Dorsolateral prefrontal cortex (tissue), 120 donors: ENCODE measurements at regions of chr13 and their contacts with region 1.

Region 1: DNA sequence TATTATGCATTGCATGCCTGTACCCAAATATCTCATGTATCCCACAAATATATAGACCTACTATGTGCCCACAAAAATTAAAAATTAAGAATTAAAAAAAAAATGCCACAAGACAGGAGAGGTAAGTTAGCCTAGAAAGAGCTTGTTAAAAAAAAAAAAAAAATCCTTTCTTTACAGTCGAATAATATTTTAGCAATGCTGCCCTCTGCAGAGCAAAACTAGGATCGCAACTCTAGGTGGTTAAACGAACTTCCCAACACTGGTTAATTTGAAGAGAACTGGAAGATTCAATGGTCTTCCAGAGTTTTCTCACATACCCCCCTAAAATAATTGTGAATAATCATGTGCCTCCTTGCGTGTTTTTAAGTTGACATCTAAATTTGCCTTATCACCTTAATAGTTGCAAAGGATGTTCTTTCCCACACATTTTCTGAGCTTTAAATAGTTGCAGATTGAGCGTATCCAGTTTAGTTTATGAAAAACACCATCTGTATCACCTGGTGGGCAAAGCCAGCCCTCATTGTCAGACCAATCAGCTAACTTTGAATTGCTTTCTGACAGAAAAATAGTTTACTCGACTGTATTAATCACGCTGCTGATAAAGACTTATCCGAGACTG is 47.4 kb upstream of the RCBTB2 start:
- DNase-seq: peak in 6 of 10 donors; percentile 47 to 84 (median 56)
- H3K4me3 ChIP-seq: no peak overlapping the region
- H3K27ac ChIP-seq: peak overlapping the region in 4 of 59 donors; percentile 21 to 66 (median 44)
- H3K27me3 ChIP-seq: no peaks in the 10 kb centered on the region
- CTCF ChIP-seq: peak; percentile 72 to 93 (median 84)

Region 2: DNA sequence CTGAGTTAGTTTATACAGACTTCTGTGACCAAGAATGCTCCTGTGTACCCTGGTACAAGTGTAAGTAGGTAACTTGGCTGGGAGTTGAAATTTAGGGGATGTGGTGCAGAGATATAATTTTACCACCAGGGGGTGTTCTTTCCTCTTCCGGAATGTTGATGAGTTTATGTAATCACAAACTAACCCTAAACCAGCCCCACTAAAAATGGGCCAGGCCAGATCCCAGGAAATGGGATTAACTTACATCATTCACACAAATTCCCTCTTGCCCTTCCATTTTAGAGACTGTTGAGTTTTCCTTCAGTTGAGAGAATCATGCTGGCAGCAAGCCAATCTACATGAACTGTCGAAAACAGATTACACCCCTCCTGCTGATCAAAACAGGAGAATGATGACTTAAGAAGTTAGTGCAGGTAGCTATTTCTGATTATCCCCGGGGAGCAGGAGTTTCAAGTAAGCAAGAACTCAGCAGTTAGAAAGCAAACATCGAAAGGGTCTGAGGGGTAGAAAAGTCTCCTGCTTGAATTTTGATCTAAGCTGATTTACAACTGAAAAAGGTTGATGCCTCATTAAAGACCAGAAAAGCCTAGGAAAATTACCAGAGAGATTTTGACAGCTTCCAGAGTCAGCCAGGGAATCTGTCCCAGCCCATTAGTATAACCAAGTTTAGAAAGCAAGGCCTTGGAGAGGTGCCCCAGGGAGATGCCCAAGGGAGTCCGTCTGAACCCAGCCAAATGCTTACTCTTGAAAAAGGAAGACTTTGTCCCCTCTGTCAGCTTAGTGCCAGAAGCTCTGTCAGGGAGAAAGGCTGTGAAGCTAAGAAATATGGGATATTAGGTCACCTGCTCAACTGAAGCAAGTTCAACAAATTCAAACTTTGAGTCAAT is 453.1 kb before region 1 on chr13:
- intact Hi-C with region 1: loop called (anchors 5 to 10 kb)
- DNase-seq: peak in 2 of 10 donors; percentile 31 to 80
- H3K4me3 ChIP-seq: peak overlapping the region in 16 of 59 donors; percentile 0 to 39 (median 14)
- H3K27ac ChIP-seq: peak overlapping the region in 53 of 59 donors; percentile 1 to 89 (median 69)
- H3K27me3 ChIP-seq: no peaks in the 10 kb centered on the region
- CTCF ChIP-seq: peak; percentile 66 to 98 (median 84)

Region 3: DNA sequence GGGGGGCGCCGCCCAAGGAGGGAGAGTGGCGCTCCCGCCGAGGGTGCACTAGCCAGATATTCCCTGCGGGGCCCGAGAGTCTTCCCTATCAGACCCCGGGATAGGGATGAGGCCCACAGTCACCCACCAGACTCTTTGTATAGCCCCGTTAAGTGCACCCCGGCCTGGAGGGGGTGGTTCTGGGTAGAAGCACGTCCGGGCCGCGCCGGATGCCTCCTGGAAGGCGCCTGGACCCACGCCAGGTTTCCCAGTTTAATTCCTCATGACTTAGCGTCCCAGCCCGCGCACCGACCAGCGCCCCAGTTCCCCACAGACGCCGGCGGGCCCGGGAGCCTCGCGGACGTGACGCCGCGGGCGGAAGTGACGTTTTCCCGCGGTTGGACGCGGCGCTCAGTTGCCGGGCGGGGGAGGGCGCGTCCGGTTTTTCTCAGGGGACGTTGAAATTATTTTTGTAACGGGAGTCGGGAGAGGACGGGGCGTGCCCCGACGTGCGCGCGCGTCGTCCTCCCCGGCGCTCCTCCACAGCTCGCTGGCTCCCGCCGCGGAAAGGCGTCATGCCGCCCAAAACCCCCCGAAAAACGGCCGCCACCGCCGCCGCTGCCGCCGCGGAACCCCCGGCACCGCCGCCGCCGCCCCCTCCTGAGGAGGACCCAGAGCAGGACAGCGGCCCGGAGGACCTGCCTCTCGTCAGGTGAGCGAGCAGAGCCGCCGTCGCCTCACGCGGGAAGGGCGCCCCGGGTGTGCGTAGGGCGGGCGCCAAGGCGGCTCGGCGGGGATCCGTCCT is 276.7 kb before region 1 on chr13 and contains the start of gene RB1:
- intact Hi-C with region 1: loop called in 1 of 2 experiments (anchors 10 kb)
- DNase-seq: peak; percentile 72 to 93 (median 85)
- H3K4me3 ChIP-seq: peak within 1 kb of the TSS; percentile 59 to 100 (median 96)
- H3K27ac ChIP-seq: peak within 1 kb of the TSS; percentile 77 to 99 (median 96)
- H3K27me3 ChIP-seq: no peaks in the 10 kb centered on the region
- CTCF ChIP-seq: peak in 11 of 56 donors; percentile 4 to 36 (median 16)
- total RNA-seq, gene RB1: 21.5 to 51.3 (median 33.9) TPM

Region 4: DNA sequence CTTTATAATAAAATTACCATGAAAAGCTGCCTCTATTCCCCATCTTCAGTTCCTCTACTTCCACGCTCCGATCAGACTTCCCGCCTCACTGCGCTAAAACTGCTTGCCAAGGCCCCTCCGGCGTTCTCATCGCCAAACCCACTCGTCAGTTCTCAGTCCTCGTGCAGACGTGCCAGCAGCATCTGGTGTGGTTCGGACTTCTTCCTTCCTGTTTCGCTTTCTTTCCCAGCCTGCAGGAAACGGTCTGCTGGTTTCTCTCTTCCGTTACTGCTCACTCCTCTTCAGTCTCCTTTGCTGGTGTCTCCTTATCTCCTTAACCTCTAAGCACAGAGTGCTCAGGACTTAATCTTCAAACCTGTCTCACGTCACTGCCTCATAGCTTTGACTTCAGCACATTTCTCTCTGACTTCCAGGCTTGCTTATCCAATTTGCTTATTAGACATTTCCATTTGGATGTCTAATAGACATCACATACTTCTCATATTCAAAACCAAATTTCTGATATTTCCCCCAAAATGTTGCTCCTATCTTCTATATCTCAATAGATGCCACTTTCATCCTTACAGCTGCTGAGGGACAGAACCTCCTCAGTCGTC is 87.7 kb before region 1 on chr13:
- intact Hi-C with region 1: loop called (anchors 5 to 10 kb)
- DNase-seq: peak in 7 of 10 donors; percentile 37 to 76 (median 64)
- H3K4me3 ChIP-seq: peak overlapping the region in 54 of 59 donors; percentile 0 to 63 (median 36)
- H3K27ac ChIP-seq: peak overlapping the region in 57 of 59 donors; percentile 26 to 88 (median 74)
- H3K27me3 ChIP-seq: no peaks in the 10 kb centered on the region
- CTCF ChIP-seq: no peak

Region 5: GRCh38 chr13:48930918-48931317 is 350.6 kb after region 1 on chr13:
- intact Hi-C with region 1: no loop called
- DNase-seq: no peak
- H3K4me3 ChIP-seq: no peak overlapping the region
- H3K27ac ChIP-seq: no peak overlapping the region
- H3K27me3 ChIP-seq: peaks cover 0 to 5% (median 0%) of the 10 kb centered on the region in 45 donors
- CTCF ChIP-seq: no peak